Mammary epithelial cell (primary cell): ENCODE measurements at regions of chr10 and their contacts with region 1.

Region 1: GRCh38 chr10:71383972-71384687 is 12.6 kb upstream of the CDH23 start:
- DNase-seq: no peak
- H3K4me3 ChIP-seq: no peak overlapping the region
- H3K27ac ChIP-seq: no peak overlapping the region
- H3K4me1 ChIP-seq: no peaks in the 10 kb centered on the region
- H3K27me3 ChIP-seq: no peaks in the 10 kb centered on the region
- CTCF ChIP-seq: peak; percentile 93 to 94

Region 2: DNA sequence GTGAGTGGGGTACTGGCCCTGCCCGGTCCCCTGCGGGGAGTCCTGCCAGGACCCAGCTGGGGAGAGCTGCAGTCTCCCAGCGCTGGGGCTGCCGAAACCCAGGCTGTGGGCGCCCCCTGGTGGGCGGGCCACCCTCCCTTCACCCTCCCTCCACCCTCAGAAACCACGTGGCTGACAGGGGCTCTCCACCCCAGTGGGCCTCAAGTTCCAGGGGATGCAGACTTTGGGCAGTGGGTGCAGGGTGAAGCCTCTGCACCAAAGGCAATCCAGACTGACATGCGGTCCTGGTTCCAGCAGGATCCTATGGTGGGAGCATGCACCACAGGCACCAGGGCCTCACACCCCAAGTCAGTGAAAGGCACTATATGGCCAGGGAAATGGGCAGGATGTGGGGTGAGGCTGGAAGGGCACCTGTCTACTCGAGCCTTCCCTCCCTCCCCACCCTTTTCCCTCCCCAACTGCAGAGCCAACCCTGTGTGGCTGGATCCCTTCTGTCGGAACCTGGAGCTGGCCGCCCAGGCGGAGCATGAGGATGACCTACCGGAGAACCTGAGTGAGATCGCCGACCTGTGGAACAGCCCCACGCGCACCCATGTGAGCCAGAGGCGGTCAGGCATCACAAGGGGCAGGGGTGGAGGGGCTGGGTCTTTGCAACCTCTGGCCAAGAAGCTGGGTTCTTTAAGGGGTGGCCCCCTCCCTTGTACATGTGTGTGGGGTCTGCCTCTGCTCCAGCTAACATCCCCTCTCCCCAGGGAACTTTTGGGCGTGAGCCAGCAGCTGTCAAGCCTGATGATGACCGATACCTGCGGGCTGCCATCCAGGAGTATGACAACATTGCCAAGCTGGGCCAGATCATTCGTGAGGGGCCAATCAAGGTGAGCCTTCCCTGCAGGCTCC is 428.1 kb after region 1 on chr10:
- CTCF ChIA-PET with region 1: no interaction called
- dilution Hi-C with region 1: no loop called
- in situ Hi-C with region 1: no loop called
- intact Hi-C with region 1: loop called (anchors 1 kb)
- DNase-seq: peak; percentile 29
- H3K4me3 ChIP-seq: no peak overlapping the region
- H3K27ac ChIP-seq: no peak overlapping the region
- H3K4me1 ChIP-seq: no peaks in the 10 kb centered on the region
- H3K27me3 ChIP-seq: no peaks in the 10 kb centered on the region
- CTCF ChIP-seq: peak; percentile 64 to 88